Posterior cingulate gyrus (tissue), 11 donors: ENCODE measurements at regions of chr11 and their contacts with region 1.

Region 1: DNA sequence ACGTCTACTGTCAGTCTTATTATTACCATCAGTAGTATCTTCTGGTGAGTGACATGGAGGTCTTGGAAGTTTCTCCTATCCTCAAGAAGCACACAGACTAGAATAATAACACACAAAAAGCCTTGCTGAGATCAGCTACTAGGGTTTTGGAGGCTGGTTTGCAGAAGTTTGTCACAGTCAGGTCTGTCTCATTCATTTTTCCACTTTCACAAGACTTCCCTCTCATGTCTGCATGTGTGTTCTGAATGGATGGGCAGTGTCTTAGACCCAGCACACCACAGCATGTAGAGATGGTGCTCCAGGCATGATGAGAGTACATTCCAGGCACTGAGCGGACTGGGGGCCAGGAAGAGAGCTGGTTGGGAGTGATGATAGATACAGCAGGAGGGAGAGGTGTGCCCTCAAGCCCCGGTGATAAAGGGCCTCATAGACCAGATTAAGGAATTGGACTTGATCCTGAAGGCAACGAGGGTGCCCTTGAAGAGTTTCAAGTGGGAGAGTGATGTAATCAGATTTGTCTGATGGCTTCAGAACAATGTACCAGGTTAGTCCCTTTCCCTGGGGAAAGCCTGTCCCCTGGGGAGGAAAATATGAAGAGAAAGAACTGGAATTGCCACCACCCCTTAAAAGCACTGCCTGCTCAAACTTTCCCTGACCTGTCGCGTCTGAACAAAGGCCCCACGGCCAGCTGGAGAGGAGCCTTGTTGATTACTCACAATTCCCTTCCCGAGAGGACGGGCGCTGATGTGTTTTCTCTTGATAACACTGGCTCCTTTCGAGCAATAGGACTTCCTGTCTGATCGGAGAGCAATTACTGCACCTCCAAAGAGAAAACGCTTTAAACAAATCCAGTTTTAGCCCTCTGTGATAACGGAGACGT is 45.1 kb upstream of the LMO2 start:
- DNase-seq: no peak

Region 2: GRCh38 chr11:33869481-33870422 is 67.2 kb before region 1 on chr11:
- intact Hi-C with region 1: loop called (anchors 10 kb)
- DNase-seq: peak in 4 of 10 donors; percentile 23 to 86 (median 51)

Region 3: DNA sequence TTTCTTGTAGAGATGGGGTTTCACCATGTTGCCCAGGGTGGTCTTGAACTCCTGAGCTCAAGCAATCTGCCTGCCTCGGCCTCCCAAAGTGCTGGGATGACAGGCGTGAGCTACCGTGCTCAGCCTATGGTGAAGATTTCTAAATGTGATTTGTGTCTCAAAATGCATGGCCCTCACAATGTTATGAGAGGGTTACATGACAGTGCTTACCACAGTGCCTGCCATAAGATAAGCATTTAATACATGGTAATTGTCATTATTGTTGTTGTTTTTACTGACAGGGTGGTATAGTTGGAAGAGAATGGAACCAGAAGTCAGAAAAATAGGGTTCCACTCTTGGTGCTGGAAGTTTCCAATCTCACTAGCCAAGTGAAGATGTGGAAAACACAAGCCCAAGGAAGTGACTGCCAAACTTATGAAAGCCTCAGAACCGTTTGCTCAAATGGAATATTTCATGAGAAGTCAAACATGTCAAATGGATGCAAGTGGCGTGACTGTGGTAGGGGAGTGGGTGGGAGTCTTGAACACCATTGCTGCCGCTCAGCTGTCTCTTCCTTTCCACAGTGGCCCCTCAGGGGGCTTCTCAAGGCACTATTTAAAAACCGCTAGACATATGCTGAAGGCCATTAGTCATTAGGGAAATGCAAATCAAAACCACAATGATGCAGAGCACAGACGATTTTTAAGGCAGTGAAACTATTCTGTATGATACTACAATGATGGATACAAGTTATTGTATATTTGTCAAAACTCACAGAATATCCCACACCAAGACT is 15.9 kb before region 1 on chr11:
- intact Hi-C with region 1: no loop called
- DNase-seq: no peak